Activated T-helper 2 cell treated with anti-CD3 and anti-CD28 coated beads, Interferon-gamma antibody, Interleukin-2, Interleukin-4, amounts not matched to agents 10 μg/mL and 5 μg/mL and 100 μg/mL, durations not matched to agents 14 hours and 24 hours and 36 hours (primary cell): ENCODE measurements at regions of chr11 and their contacts with region 1.

Region 1: GRCh38 chr11:128848815-128849455 is 18.2 kb downstream of the KCNJ1 start:
- DNase-seq: peak; percentile 26
- H3K4me3 Mint-ChIP-seq: no peak overlapping the region
- H3K27ac Mint-ChIP-seq: no peak overlapping the region
- H3K4me1 Mint-ChIP-seq: peaks cover 11% of the 10 kb centered on the region
- H3K27me3 Mint-ChIP-seq: no peaks in the 10 kb centered on the region

Region 2: GRCh38 chr11:128164080-128164741 is 684.7 kb before region 1 on chr11:
- intact Hi-C with region 1: loop called (anchors 5 kb)
- DNase-seq: no peak
- H3K4me3 Mint-ChIP-seq: no peak overlapping the region
- H3K27ac Mint-ChIP-seq: no peak overlapping the region
- H3K4me1 Mint-ChIP-seq: peaks cover 6% of the 10 kb centered on the region
- H3K27me3 Mint-ChIP-seq: peaks cover 6% of the 10 kb centered on the region

Region 3: GRCh38 chr11:128653801-128654231 is 195.1 kb before region 1 on chr11:
- intact Hi-C with region 1: no loop called
- DNase-seq: no peak
- H3K4me3 Mint-ChIP-seq: no peak overlapping the region
- H3K27ac Mint-ChIP-seq: no peak overlapping the region
- H3K4me1 Mint-ChIP-seq: peaks cover 6% of the 10 kb centered on the region
- H3K27me3 Mint-ChIP-seq: peaks cover 40% of the 10 kb centered on the region

Region 4: DNA sequence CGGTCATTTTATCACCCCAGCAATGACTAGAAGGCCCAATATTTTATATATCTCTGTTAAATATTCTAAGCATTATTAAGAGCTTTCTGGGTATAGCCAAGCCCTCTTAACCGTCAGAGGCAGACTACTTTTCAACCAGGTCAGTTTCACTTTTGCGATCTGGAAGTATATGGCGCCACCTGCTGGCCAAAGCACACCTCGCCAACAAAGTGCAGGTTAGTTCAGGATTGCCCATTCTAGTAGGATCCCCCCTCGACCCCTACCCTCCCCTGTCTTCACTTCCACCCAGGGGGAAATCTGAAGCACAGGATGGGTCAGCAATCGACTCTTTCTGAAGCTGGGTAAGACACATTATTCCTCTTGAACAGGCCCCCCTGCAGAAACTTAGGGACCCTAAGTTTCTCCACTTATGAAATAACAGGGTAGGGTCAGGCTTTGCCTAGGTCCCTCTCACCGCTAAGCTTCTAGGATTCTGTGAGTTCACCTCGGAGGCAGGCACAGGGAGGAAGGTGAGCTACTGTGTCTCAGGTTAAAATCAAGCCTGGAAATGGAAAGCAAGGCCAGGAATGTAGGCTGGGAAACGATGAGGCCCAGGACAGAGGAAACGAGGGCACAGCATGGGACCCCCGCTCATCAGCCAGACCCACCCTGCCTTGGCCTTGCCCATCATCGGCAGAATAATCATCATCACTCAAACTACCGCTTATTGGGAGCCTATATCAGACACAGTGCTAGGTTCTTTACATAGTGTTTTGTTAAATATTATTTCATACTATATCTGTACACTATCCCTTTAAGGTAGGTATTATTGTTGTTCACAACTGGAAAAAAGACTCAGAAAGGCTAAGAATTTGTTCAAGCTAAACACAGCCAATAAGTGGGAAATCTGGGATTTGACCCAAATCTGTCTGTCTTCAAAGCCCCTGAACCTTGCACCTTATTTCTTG is 17.5 kb before region 1 on chr11:
- intact Hi-C with region 1: no loop called
- DNase-seq: peak; percentile 75
- H3K4me3 Mint-ChIP-seq: peak overlapping the region; percentile 6
- H3K27ac Mint-ChIP-seq: peak overlapping the region; percentile 86
- H3K4me1 Mint-ChIP-seq: peaks cover 18% of the 10 kb centered on the region
- H3K27me3 Mint-ChIP-seq: peaks cover 5% of the 10 kb centered on the region

Region 5: GRCh38 chr11:128893578-128894285 is 44.8 kb after region 1 on chr11:
- intact Hi-C with region 1: no loop called
- DNase-seq: no peak
- H3K4me3 Mint-ChIP-seq: no peak overlapping the region
- H3K27ac Mint-ChIP-seq: no peak overlapping the region
- H3K4me1 Mint-ChIP-seq: peaks cover 7% of the 10 kb centered on the region
- H3K27me3 Mint-ChIP-seq: peaks cover 59% of the 10 kb centered on the region